GM12878 (cell line): ENCODE measurements at regions of chr22 and their contacts with region 1.

Region 1: GRCh38 chr22:37218771-37219411 is 6.6 kb upstream of the SSTR3 start:
- DNase-seq: peak; percentile 99
- ATAC-seq: peak; percentile 82
- H3K4me3 ChIP-seq: peak overlapping the region; percentile 80
- H3K27ac ChIP-seq: peak overlapping the region; percentile 99
- H3K4me1 ChIP-seq: peaks cover 73% of the 10 kb centered on the region
- H3K27me3 ChIP-seq: no peaks in the 10 kb centered on the region
- CTCF ChIP-seq: no peak
- EP300 ChIP-seq: peak; percentile 85 to 89
- POLR2A ChIP-seq: peak; percentile 62; the same call in 1 of the 2 replicates
- RAD21 ChIP-seq: no peak

Region 2: DNA sequence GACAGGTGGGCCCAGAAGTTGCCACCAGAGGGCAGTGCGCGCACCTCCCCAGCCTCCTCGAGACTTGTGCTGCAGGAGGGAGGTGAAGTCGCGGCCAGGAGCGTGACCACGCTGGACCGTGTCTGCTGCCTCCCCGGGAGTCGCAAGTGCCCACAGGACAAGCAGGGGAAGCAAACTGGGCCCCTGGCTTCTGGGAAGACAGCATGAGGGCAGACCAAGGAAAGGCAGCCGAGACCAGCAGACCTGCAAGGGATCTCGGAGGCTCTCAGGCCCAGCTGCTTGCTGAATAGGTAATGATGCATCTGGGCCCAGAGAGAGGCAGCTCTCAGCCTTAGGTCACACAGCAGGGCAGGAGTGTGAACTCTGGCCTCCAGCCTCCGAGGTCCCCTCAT is 52.2 kb before region 1 on chr22:
- CTCF ChIA-PET with region 1: interaction called, 26 read pairs
- POLR2A ChIA-PET with region 1: interaction called, 4 read pairs
- RAD21 ChIA-PET with region 1: interaction called, 39 read pairs
- SMC1A ChIA-PET with region 1: interaction called, 16 read pairs
- in situ Hi-C with region 1: no loop called
- intact Hi-C with region 1: loop called (anchors 1 kb)
- DNase-seq: no peak
- ATAC-seq: peak; percentile 21
- H3K4me3 ChIP-seq: no peak overlapping the region; the same call in 1 of the 2 replicates
- H3K27ac ChIP-seq: no peak overlapping the region; the same call in 1 of the 2 replicates
- H3K4me1 ChIP-seq: peaks cover 62% of the 10 kb centered on the region
- H3K27me3 ChIP-seq: no peaks in the 10 kb centered on the region
- CTCF ChIP-seq: peak in 2 of 3 experiments; percentile 87 to 92; a peak in 5 of 6 replicates
- EP300 ChIP-seq: no peak
- POLR2A ChIP-seq: no peak
- RAD21 ChIP-seq: peak; percentile 77

Region 3: DNA sequence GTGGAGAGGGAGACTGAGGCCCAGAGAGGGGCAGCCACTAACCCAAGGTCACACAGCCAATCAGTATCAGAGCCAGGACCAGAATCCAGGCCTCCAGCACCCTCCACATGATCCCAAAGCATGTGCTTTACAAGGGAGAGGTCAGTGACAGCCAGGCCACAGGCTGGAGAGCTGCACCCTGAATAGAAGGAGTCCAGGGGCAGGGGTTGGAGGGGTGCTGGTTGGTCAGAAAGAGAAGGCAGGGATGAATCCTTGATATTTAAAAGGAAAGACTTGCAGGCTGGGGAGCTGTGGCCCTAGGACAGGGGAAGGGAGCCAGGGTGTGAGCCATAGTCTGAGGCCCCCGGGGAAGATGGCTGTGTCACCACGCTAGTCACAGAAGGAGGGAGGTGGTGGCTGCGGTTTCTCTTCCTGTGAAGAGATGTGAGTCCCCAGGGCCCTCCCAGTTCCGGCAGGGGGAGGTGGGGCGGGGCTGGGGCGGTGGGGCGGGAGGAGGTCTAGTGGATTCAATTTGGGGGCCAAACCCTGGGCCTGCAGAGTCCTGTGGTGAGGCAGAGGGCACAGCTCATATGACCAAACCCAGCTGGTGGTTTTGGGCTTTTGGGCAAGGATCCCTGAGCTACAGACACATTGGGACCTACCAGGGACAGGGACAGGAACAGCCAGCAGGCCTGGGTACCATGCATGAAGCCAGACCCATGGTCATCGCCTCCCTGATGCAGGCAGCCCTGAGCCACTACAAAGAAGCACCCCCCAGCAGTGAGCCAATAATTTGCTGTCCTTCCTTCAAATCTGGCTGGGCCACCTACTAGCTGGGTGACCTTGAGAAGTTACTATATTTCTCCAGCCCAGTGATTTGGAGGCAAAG is 11.1 kb after region 1 on chr22:
- CTCF ChIA-PET with region 1: interaction called, 17 read pairs
- POLR2A ChIA-PET with region 1: interaction called, 34 read pairs
- RAD21 ChIA-PET with region 1: interaction called, 28 read pairs
- SMC1A ChIA-PET with region 1: interaction called, 62 read pairs
- in situ Hi-C with region 1: no loop called
- intact Hi-C with region 1: loop called (anchors 1 kb)
- DNase-seq: peak; percentile 60
- ATAC-seq: peak; percentile 88
- H3K4me3 ChIP-seq: peak overlapping the region; percentile 60; the same call in 1 of the 2 replicates
- H3K27ac ChIP-seq: peak overlapping the region; percentile 100
- H3K4me1 ChIP-seq: peaks cover 70% of the 10 kb centered on the region
- H3K27me3 ChIP-seq: no peaks in the 10 kb centered on the region
- CTCF ChIP-seq: no peak
- EP300 ChIP-seq: no peak
- POLR2A ChIP-seq: peak; percentile 69
- RAD21 ChIP-seq: no peak

Region 4: DNA sequence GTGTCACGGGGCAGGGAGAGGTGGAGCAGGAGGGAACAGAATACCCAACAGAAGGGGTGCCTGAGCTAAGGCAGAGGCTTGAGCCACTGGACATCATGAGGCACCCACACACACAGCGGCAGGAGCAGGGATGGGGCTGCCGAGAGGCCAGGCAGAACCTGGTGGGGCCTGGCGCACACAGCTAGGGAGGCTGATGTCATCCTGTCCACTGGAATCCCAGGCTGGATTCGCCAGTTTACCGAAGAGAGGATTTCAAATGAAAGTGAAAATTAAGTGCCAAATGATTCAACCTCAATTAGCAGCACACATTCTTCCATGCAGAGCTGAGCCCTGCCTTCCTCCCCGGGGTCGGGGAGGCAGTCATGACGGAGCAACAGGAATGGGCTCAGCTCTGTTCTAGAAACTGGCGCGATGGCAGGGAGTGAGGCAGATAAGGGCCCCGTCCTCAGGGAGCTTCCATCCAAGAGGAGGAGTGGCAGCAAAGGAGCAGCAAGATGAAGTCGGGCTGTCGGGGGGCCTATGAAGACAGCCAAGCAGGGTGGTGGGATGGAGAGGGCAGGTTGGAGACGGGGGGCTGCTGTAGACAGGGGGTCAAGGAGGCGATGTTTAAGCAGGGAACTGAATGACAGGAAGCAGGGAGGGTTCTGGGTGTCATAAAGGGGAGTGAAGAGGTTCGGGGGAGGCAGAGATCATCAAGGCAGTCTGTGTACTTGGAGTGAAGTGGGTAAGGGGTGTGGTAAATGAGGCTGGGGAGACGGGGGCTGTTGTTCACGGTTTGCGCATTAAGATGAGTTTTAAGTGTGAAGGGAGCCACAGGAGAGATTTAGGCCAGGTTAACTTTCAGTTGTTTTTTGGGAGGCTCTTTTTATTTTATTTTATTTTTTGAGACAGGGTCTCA is 18.7 kb after region 1 on chr22:
- CTCF ChIA-PET with region 1: interaction called, 59 read pairs
- POLR2A ChIA-PET with region 1: interaction called, 246 read pairs
- RAD21 ChIA-PET with region 1: interaction called, 196 read pairs
- SMC1A ChIA-PET with region 1: interaction called, 109 read pairs
- in situ Hi-C with region 1: no loop called
- intact Hi-C with region 1: no loop called
- DNase-seq: no peak
- ATAC-seq: no peak
- H3K4me3 ChIP-seq: no peak overlapping the region
- H3K27ac ChIP-seq: no peak overlapping the region
- H3K4me1 ChIP-seq: peaks cover 82% of the 10 kb centered on the region
- H3K27me3 ChIP-seq: no peaks in the 10 kb centered on the region
- CTCF ChIP-seq: no peak
- EP300 ChIP-seq: no peak
- POLR2A ChIP-seq: no peak
- RAD21 ChIP-seq: no peak

Region 5: DNA sequence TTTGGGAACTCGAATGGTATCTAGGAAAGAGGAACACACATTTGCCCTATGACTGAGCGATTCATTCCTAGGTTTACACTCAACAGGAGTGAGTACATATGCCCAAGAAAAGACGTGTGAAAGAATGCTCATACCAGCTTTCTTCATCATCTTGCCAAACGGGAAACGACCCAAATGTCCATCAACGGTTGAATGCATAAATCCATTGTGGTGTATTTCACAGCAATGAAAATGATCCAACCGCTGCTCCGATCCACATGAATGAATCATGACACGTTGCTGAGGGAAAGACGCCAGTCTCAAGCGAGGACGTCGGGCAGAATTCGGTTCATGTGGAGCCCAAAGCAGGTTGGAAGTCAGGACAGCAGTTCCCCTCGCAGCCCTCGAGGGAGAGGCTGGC is 134.9 kb after region 1 on chr22:
- CTCF ChIA-PET with region 1: no interaction called
- POLR2A ChIA-PET with region 1: no interaction called
- RAD21 ChIA-PET with region 1: no interaction called
- SMC1A ChIA-PET with region 1: no interaction called
- in situ Hi-C with region 1: no loop called
- intact Hi-C with region 1: no loop called
- DNase-seq: no peak
- ATAC-seq: no peak
- H3K4me3 ChIP-seq: no peak overlapping the region
- H3K27ac ChIP-seq: no peak overlapping the region
- H3K4me1 ChIP-seq: no peaks in the 10 kb centered on the region
- H3K27me3 ChIP-seq: peaks cover 4% of the 10 kb centered on the region in 2 experiments; a peak in 3 of 4 replicates
- CTCF ChIP-seq: no peak
- EP300 ChIP-seq: no peak
- POLR2A ChIP-seq: no peak
- RAD21 ChIP-seq: no peak